BJ (cell line): ENCODE measurements at regions of chr5 and their contacts with region 1.

Region 1: GRCh38 chr5:15234366-15234765 is 265.6 kb upstream of the FBXL7 start:
- DNase-seq: no peak
- H3K4me3 ChIP-seq: no peak overlapping the region
- H3K27me3 ChIP-seq: peaks cover 1% of the 10 kb centered on the region; the same call in 1 of the 2 replicates
- CTCF ChIP-seq: no peak

Region 2: DNA sequence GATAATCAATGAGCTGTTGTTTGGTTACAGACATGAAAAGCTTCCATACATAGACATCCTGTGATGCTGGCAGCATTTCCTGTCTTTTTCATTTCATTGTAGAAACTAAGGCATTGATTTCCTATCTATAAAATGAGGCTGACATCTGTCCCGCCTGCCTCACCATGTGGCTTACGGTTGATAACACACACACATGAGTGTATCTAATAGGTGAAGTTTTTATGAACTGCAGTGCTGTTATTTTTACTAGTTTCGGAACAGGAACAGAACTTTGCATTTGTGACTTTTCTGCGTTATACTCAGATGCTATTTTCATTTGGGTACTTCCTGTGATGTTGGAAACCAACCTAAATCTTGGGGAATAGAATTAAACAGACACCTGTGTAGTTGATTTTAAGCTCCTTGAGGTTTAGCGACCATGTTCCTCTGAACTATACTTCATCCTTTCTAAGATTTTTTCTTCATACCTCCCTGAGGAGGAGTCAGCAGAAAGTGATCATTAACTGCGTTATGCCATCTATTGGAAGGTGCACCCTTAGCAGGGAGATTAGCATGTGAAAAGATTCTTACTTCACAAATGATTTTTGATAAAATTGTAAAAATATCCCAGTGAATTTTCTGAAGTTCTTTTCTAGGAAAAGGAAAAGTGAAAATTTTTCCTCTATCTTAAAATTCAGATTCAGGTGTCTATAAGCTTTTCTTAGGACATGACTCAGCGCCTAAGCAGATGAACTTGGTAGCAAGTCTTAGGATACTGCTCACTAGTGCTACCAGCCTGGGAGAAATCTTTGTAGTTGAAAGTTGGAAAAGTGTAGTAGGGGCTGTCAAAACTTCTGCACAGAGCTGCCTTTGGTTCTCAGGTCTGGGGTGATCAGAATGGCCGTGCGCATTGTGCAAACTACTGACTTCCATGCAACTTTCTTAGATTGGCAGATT is 956.7 kb before region 1 on chr5:
- CTCF ChIA-PET with region 1: no interaction called
- POLR2A ChIA-PET with region 1: no interaction called
- DNase-seq: no peak
- H3K4me3 ChIP-seq: no peak overlapping the region
- H3K27me3 ChIP-seq: no peaks in the 10 kb centered on the region
- CTCF ChIP-seq: no peak

Region 3: GRCh38 chr5:15069407-15069905 is 164.9 kb before region 1 on chr5:
- CTCF ChIA-PET with region 1: no interaction called
- POLR2A ChIA-PET with region 1: no interaction called
- DNase-seq: no peak
- H3K4me3 ChIP-seq: no peak overlapping the region
- H3K27me3 ChIP-seq: no peaks in the 10 kb centered on the region
- CTCF ChIP-seq: no peak

Region 4: GRCh38 chr5:15209053-15209762 is 25.2 kb before region 1 on chr5:
- CTCF ChIA-PET with region 1: no interaction called
- POLR2A ChIA-PET with region 1: interaction called, 23 read pairs
- DNase-seq: no peak
- H3K4me3 ChIP-seq: no peak overlapping the region
- H3K27me3 ChIP-seq: no peaks in the 10 kb centered on the region
- CTCF ChIP-seq: no peak

Region 5: DNA sequence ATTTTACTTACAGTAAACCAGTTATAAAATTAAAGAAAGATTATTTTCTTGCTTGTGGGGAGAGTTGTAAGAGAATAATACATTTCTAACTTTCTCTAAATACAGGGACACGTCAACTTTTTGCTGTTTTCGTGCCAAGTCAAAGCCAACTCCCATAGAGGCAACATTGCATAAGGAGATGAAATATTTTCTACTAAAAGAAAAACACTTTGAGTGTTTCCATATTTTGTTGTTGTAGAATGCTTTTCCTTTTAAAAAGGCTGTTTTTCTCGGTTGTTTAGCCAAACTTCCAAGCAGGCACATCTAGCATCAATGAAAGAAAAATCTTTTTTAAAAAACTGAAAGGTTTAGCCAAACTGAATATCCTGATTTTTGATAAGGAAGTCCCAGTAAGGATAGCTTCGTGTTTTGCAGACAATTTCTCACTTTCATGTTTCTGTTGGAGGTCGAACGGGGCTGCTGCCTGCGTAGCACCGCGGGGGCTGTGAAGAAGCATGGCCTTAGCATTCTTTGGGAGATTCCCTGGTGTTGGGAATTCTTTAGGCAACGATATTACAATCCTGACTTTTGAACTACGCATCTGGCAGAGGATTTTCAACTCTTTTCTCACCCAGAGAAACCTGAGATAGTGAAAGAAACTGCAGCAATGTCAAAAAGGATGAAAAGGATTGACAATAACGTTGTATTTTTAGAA is 157.5 kb after region 1 on chr5:
- CTCF ChIA-PET with region 1: no interaction called
- POLR2A ChIA-PET with region 1: no interaction called
- DNase-seq: no peak
- H3K4me3 ChIP-seq: no peak overlapping the region
- H3K27me3 ChIP-seq: no peaks in the 10 kb centered on the region
- CTCF ChIP-seq: no peak